ENCODE measurements at regions of chr9 and their contacts with region 1.

Region 1: DNA sequence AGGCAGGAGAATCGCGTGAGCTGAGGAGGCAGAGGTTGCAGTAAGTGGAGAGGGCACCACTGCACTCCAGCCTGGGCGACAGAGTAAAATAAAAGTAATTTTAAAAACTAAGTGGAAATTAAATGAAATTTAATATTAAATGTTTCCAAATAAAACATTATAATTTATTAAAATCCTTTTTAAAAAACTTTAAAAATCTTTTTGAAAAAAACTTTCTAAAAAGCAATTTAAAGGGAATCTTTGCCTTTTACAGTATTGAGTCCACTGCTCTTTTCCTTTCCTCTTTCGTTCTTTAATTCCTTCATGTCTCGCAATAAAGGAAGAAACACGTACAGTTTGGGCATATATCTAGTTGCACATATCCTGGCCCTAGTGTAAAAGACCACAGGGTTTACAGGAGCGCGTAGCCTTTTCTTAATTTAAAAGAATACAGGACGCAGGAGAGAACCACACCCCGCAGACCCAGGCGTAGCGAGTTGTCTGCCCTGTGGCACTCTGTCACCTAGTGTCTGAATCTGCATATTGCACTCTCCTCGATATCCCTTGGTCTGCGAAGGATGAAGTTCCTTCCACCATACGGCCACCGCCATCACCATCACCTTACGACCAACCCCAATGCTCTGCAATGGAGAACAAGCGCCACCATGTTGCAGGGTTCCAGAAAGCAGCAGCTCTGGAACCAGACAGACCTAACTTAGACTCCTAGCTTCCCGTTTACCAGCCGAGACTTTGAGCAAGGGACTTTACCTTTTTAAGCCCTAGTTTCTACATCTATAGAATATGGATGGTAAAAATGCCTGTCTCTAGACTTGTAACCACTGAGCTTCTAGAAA is 77.6 kb upstream of the DMRT1 start:
- DNase-seq: peak; percentile 86 to 95
- ATAC-seq: peak; percentile 100
- H3K4me3 ChIP-seq: peak overlapping the region; percentile 19; the same call in 1 of the 3 replicates
- H3K27ac ChIP-seq: 0 out of 6 replicates have a peak overlapping the region, but pooled peaks of 1 of the 2 experiments have one; percentile 56
- H3K4me1 ChIP-seq: 0 out of 3 replicates have a peak, but pooled peaks cover 4% of the 10 kb centered on the region
- CTCF ChIP-seq: peak; percentile 99
- EP300 ChIP-seq: no peak
- POLR2A ChIP-seq: no peak
- RAD21 ChIP-seq: peak; percentile 98 to 100

Region 2: GRCh38 chr9:385818-386398 is 378.0 kb before region 1 on chr9:
- CTCF ChIA-PET with region 1: interaction called, 66 read pairs
- POLR2A ChIA-PET with region 1: no interaction called
- DNase-seq: peak; percentile 56 to 71
- ATAC-seq: peak; percentile 93 to 98
- H3K4me3 ChIP-seq: no peak overlapping the region
- H3K27ac ChIP-seq: no peak overlapping the region
- H3K4me1 ChIP-seq: peaks cover 7% of the 10 kb centered on the region; the same call in 1 of the 3 replicates
- CTCF ChIP-seq: peak; percentile 94
- EP300 ChIP-seq: no peak
- POLR2A ChIP-seq: no peak
- RAD21 ChIP-seq: peak; percentile 96 to 97

Region 3: DNA sequence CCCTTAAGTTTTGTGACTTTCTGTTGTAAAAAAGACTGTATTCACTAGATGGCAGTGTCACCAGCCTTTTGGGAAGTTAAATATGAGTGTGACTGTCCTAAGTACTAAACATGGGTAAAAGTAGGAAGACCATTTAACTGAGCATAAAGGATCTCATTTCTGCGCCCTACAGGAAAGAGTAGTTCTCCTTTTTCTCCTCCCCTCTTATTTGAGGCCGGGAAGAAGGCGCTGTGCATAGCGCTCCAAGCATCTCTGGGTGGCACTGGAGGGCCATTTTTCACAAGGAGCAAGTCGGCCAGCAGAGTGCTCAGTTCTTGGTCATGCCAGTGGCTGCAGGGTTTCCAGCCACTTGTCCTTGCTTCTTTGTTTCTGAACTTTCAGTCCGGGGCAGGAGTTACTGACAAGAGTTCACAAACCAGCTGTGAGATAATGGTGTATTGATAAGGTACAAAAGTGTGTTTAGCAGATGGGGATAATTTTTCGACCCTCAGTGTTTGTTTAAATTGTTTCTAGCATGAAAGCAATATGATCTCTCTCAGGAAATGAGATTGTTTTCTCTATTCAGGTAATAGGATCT is 150.0 kb before region 1 on chr9:
- CTCF ChIA-PET with region 1: interaction called, 371 read pairs
- POLR2A ChIA-PET with region 1: no interaction called
- DNase-seq: peak; percentile 43 to 85
- ATAC-seq: peak; percentile 98 to 100
- H3K4me3 ChIP-seq: no peak overlapping the region
- H3K27ac ChIP-seq: peak overlapping the region in 1 of 2 experiments; percentile 2; a peak in 2 of 6 replicates
- H3K4me1 ChIP-seq: peaks cover 6% of the 10 kb centered on the region; the same call in 2 of the 3 replicates
- CTCF ChIP-seq: peak; percentile 99
- EP300 ChIP-seq: no peak
- POLR2A ChIP-seq: no peak
- RAD21 ChIP-seq: peak; percentile 91 to 98

Region 4: DNA sequence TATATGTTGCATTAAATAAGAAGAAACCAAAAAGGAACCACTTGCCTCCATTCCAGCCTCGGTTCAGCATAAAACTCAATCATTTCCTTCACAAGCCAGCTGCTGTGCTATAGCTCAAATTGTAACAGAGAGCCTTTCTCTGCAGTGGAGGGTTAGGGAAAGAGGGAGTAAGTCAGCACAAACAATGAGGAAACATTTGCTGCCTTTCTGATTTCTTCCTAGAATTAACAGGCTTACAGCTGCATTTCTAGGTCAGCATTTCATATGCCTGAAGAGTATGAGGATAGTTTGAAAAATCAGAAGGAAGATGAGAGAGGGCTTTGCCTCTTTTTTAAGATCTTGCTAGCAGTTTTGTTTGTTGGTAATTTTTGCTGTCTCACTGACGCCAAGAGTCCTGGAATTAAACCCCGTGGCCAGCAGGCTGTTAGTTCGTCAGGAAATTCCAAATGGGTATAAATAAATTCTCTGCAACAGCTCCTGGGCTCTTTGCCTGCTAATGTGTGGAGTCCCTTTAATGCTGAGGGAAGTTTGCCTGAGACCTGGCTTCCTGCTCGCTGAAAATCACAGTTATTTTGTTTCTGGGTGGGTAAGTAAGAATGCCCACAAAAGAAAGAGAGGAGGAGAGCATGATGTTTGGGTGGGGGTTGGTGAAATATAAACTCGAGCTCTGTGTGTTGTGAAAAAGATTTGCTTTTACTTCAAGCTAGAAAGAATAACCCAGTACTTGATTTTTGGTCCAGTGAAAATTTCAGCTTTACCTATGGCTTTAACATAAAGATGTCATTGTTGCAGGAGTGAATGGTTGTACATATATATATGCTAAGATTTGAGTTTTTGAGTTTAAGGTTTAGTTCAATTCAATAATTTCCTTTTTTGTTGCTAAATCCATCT is 70.5 kb before region 1 on chr9:
- CTCF ChIA-PET with region 1: interaction called, 14 read pairs
- POLR2A ChIA-PET with region 1: no interaction called
- DNase-seq: no peak
- ATAC-seq: peak in 1 of 2 experiments; percentile 27; a peak in 3 of 6 replicates
- H3K4me3 ChIP-seq: peak overlapping the region; percentile 16; the same call in 1 of the 3 replicates
- H3K27ac ChIP-seq: peak overlapping the region; percentile 78 to 82
- H3K4me1 ChIP-seq: peaks cover 60% of the 10 kb centered on the region
- CTCF ChIP-seq: no peak
- EP300 ChIP-seq: no peak
- POLR2A ChIP-seq: no peak
- RAD21 ChIP-seq: no peak

Region 5: GRCh38 chr9:792282-793260 is 28.7 kb after region 1 on chr9:
- CTCF ChIA-PET with region 1: interaction called, 40 read pairs
- POLR2A ChIA-PET with region 1: no interaction called
- DNase-seq: no peak
- ATAC-seq: no peak
- H3K4me3 ChIP-seq: no peak overlapping the region
- H3K27ac ChIP-seq: no peak overlapping the region
- H3K4me1 ChIP-seq: no peaks in the 10 kb centered on the region
- CTCF ChIP-seq: no peak
- EP300 ChIP-seq: no peak
- POLR2A ChIP-seq: no peak
- RAD21 ChIP-seq: no peak

Region 6: DNA sequence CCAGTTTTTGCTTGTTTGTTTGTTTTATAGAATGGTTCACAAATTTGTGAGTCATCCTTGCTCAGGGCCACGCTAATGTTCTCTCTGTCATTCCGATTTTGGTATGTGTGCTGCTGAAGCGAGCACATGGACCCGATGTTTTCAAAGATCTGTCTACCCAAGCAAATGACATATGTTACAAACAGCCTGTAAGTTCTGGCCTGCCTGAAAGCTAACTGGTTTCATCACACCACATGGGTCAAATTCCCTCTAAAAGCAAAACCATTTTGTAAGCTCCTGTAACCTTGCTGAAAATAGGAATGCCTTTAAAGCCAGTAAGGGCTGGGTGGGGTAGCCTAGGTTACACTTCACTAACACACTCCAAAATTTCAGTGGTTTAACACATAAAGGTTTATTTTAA is 237.9 kb after region 1 on chr9:
- CTCF ChIA-PET with region 1: interaction called, 10 read pairs
- POLR2A ChIA-PET with region 1: no interaction called
- DNase-seq: no peak
- ATAC-seq: no peak
- H3K4me3 ChIP-seq: no peak overlapping the region
- H3K27ac ChIP-seq: no peak overlapping the region
- H3K4me1 ChIP-seq: peaks cover 4% of the 10 kb centered on the region; the same call in 1 of the 3 replicates
- CTCF ChIP-seq: no peak
- EP300 ChIP-seq: no peak
- POLR2A ChIP-seq: no peak
- RAD21 ChIP-seq: no peak